GM10248 (cell line): ENCODE measurements at regions of chr5 and their contacts with region 1.

Region 1: GRCh38 chr5:168679515-168679920 is 100.3 kb upstream of the PANK3 start:
- DNase-seq: peak; percentile 74
- CTCF ChIP-seq: peak; percentile 87

Region 2: DNA sequence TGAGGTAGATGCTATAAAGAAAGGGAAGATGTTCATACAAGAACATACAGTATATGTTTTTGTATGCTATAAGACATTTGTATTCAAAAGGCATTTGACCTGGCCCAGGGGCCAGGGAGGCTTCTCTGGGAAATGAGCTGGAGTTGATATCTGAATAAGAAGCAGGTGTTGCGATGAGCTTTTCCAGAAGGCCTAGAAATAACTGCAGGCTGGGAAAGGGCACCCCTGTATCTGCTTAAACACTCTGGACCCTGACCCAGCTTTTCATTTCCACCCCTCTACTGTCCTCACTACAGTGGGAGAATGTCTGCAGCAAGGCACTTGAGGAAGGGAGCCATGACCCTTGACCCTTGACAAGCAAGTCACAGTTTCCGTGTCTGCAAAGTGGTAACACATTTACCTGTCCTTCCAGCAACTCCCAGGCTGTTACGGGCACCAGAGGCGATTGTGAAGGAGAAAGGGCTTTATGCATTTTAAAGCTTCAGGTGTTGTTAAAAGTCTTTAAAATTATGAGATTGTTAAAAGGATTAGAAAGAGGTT is 12.1 kb before region 1 on chr5:
- CTCF ChIA-PET with region 1: interaction called, 14 read pairs
- POLR2A ChIA-PET with region 1: no interaction called
- DNase-seq: no peak
- CTCF ChIP-seq: no peak

Region 3: DNA sequence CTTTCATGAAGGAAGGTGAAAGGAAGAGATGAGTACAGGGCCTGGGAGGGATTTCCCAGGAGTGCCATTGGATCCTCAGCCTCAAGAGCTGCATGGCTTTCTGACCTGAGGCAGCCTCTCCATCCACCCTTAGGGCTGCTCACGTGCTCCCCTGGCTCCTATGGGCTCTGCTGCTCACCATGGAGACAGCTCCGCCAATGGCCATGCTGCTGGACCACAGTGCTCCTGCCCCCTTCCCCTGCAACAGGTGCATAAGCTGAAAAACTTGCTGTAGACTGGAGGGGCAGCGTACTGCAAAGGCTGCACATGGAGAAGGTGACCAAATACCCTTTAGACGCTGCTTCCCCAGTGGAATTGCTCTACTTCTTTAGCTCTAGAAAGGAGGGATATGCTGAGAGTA is 12.4 kb after region 1 on chr5:
- CTCF ChIA-PET with region 1: interaction called, 19 read pairs
- POLR2A ChIA-PET with region 1: no interaction called
- DNase-seq: no peak
- CTCF ChIP-seq: no peak